PC-9 (cell line): ENCODE measurements at regions of chr1 and their contacts with region 1.

Region 1: DNA sequence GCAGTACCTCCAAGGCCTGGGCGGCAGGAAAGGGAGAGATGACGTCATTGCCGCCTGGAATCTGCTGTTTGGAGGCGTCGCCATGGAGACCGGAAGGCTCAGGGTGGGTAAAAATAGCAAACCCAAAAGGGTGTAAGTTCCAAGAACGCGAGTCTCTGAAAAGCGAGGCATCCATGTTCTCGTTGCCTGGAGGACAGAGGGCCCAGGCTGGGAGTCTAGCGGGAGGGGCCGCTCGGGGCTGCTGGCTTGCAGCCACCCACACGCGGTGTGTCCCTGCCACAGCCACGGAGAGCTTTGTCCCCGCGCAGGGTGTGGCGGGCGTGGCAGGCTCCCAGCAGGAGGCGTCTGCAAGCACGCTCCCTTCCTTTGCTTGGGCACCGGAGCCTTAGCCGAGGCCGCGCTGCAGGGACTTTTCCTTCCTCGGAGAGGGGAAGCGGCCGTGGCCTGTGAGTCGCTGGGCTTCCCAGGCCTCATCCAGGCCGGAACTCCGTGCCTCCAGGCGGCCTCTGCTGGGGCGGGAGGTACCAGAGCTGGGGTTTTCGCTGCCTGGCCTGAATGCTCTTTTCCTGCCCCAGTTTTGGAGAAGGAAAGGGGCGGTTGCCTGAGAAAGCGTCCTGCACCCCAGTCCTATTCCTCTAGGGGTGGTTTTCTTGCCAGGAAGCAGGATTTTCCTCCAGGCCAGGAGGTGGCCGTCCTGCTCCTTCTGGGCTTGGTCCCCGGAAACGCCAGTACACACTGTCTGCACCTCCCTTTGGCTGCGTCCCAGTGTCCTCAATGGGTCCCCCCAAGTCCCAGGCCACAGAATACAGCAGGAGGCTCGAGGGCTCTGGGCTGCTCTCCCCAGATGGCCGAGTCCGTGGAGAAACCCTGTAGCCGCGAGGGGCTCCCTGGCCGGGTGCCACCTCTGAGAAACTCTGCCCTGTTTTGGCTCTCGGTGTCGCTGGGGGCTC is 15.3 kb upstream of the SKI start:
- DNase-seq: peak; percentile 80 to 84
- H3K4me3 ChIP-seq: peak overlapping the region; percentile 48; the same call in 1 of the 2 replicates
- H3K27ac ChIP-seq: peak overlapping the region; percentile 51
- H3K4me1 ChIP-seq: peaks cover 40% of the 10 kb centered on the region
- H3K27me3 ChIP-seq: no peaks in the 10 kb centered on the region
- CTCF ChIP-seq: peak; percentile 47; the same call in 1 of the 2 replicates

Region 2: DNA sequence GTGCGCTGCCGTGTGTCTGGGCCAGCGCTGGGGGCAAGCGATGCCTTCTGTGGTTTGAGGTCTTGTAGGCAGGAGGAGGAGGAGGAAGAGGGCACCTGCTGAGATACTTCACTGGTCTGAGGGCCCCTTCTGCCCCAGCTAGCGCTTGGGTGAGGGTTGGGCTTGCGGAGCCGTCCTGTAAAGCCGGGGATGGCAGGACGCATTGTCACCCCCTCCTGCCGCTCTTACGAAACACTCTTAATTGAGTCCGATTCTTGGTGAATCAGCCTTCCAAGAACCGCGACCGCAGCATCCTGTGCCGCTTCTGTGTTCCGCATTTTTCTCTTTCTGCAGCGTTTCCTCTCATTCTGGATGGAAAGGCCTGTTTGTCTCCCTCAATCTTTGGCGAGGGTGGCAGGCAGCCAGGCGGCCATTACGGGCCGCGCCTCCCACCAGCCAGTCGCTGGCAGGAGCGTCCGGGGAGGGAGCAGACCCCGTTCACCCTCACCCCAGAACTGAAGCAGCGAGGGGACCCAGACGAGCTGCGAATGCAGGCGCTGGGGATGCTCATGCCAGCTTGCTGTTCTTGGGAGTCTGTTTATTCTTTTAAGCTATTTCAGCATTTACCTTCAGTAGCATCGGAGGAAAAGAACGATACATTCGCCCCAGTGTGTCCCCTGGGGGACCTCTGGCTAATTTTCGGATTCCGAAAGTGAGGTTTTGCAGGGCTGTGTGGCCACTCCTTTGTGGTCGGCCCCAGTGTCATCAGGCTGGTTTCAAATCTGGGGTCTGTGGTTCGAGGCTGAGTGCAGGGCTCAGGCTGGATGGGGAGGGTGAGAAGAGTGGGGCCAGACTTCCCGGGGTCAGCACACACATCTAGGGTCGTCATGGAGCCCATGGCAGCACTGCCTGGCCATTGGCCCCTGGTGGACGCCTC is 78.0 kb after region 1 on chr1:
- CTCF ChIA-PET with region 1: no interaction called
- POLR2A ChIA-PET with region 1: interaction called, 4 read pairs
- intact Hi-C with region 1: loop called (anchors 5 kb)
- DNase-seq: peak; percentile 86 to 96
- H3K4me3 ChIP-seq: peak overlapping the region; percentile 50; the same call in 1 of the 2 replicates
- H3K27ac ChIP-seq: peak overlapping the region; percentile 78
- H3K4me1 ChIP-seq: peaks cover 34% of the 10 kb centered on the region
- H3K27me3 ChIP-seq: no peaks in the 10 kb centered on the region
- CTCF ChIP-seq: no peak